Endothelial cell of umbilical vein (primary cell): ENCODE measurements at regions of chr13 and their contacts with region 1.

Region 1: GRCh38 chr13:80955501-80955900 is 614.6 kb upstream of the SPRY2 start:
- DNase-seq: peak; percentile 82
- H3K4me3 ChIP-seq: no peak overlapping the region
- H3K27ac ChIP-seq: peak overlapping the region; percentile 48
- H3K4me1 ChIP-seq: peaks cover 35% of the 10 kb centered on the region
- H3K27me3 ChIP-seq: no peaks in the 10 kb centered on the region
- CTCF ChIP-seq: no peak
- POLR2A ChIP-seq: no peak

Region 2: GRCh38 chr13:80048802-80049201 is 906.7 kb before region 1 on chr13:
- CTCF ChIA-PET with region 1: no interaction called
- POLR2A ChIA-PET with region 1: no interaction called
- dilution Hi-C with region 1: no loop called
- intact Hi-C with region 1: loop called (anchors 10 kb)
- DNase-seq: peak; percentile 91
- H3K4me3 ChIP-seq: no peak overlapping the region
- H3K27ac ChIP-seq: peak overlapping the region; percentile 36
- H3K4me1 ChIP-seq: peaks cover 26% of the 10 kb centered on the region
- H3K27me3 ChIP-seq: no peaks in the 10 kb centered on the region
- CTCF ChIP-seq: no peak
- POLR2A ChIP-seq: no peak

Region 3: DNA sequence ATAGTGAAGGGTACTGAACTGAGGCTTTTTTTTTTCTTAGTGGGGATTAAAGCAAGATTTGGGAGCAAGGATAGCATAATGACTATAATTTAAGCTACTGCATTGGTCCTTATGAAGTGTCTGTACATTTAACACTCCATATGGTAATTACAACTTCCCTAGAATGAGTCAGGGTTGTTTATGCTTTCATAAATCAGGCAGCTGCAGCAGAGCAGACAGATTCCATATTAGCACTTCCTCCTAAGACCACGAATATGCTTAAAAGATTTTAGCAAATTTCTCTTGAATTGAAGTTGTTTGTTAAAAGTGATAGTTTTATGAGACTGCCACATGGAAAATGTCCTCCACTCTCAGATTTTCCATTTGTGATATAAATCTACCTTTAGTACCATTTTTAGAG is 213.5 kb before region 1 on chr13:
- CTCF ChIA-PET with region 1: no interaction called
- POLR2A ChIA-PET with region 1: no interaction called
- dilution Hi-C with region 1: no loop called
- intact Hi-C with region 1: loop called (anchors 5 kb)
- DNase-seq: peak; percentile 66
- H3K4me3 ChIP-seq: no peak overlapping the region
- H3K27ac ChIP-seq: no peak overlapping the region
- H3K4me1 ChIP-seq: peaks cover 7% of the 10 kb centered on the region
- H3K27me3 ChIP-seq: no peaks in the 10 kb centered on the region
- CTCF ChIP-seq: no peak
- POLR2A ChIP-seq: no peak

Region 4: DNA sequence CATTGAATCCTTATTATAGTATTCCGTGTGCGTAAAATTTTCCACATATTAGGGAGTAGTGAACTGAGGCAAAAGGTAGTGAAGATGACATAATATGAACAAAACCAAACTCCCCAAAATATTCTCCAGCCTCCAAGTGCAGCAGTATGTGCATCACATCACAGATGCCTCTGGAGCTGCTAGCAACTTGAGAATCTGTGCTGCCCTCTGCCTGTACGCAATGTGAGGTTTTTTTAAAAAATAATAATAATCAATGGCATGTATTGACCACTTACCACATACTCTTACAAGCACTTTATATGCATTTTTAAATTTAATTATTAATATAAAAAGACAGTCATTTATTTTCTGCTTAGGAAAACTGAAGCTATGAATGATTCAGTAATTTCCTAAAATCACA is 31.6 kb before region 1 on chr13:
- CTCF ChIA-PET with region 1: interaction called, 12 read pairs
- POLR2A ChIA-PET with region 1: no interaction called
- dilution Hi-C with region 1: no loop called
- intact Hi-C with region 1: loop called (anchors 1 kb)
- DNase-seq: peak; percentile 22
- H3K4me3 ChIP-seq: no peak overlapping the region
- H3K27ac ChIP-seq: peak overlapping the region; percentile 65
- H3K4me1 ChIP-seq: peaks cover 27% of the 10 kb centered on the region
- H3K27me3 ChIP-seq: no peaks in the 10 kb centered on the region
- CTCF ChIP-seq: no peak
- POLR2A ChIP-seq: no peak

Region 5: GRCh38 chr13:80979035-80979641 is 23.6 kb after region 1 on chr13:
- CTCF ChIA-PET with region 1: interaction called, 29 read pairs
- POLR2A ChIA-PET with region 1: no interaction called
- dilution Hi-C with region 1: no loop called
- intact Hi-C with region 1: no loop called
- DNase-seq: peak; percentile 73
- H3K4me3 ChIP-seq: no peak overlapping the region
- H3K27ac ChIP-seq: no peak overlapping the region
- H3K4me1 ChIP-seq: no peaks in the 10 kb centered on the region
- H3K27me3 ChIP-seq: no peaks in the 10 kb centered on the region
- CTCF ChIP-seq: peak; percentile 78 to 86
- POLR2A ChIP-seq: no peak